HEK293 (cell line): ENCODE measurements at regions of chr12 and their contacts with region 1.

Region 1: DNA sequence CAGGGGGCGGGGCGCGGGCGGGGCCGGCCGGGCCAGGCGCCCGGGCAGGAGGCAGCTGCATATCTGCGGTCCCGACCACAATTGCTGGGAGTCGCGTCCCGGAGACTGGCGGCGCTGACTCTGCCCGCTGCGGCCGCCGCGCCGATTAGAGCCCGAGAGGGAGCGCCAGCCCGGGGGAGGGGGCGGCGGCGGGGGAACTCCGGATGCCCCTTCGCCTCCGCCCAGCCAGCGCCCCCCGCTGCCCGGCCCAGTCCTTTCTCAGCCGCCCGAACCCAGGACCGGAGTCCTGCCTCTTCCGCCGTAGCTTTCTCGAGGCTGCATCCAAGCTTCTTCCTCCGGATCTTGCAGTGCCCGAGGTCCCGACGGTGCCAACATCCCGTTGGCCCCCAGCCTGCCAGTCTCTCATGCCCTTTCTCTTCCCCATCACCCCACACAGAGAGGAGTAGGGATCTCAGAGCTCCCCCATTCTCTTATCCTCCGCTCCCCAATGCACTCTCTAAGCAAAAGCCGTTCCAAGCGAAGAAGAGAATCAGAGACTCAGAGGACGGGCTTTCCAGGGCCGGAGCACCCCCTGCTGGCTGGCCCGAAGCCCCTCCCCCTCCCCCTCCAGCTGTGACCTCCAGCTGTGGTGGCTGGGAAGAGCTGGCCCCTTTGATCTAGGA is 8.8 kb upstream of the SP7 start:
- H3K4me3 ChIP-seq: peak overlapping the region; percentile 62
- H3K27ac ChIP-seq: peak overlapping the region; percentile 21; the same call in 1 of the 2 replicates
- H3K4me1 ChIP-seq: no peaks in the 10 kb centered on the region
- CTCF ChIP-seq: peak; percentile 93

Region 2: DNA sequence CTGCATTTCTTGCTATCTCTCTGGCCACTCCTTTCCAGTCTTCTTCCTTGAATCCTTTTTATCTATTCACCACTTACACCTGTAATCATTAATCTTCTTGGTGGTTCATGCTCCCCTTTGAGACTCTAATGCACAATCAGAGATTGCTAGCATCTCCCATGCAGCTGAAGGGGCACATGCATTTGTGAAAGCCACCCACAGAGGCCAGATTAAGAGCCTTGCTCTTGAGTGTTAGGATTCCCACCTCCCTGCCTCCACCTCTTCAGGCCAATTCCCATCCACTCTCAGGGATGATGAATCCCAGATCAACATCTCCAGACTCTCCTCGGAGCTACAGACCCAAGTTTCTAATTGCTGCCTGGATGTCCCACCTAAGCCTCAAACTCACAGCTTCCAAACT is 415.4 kb before region 1 on chr12:
- CTCF ChIA-PET with region 1: no interaction called
- POLR2A ChIA-PET with region 1: no interaction called
- H3K4me3 ChIP-seq: no peak overlapping the region
- H3K27ac ChIP-seq: no peak overlapping the region
- H3K4me1 ChIP-seq: peaks cover 17% of the 10 kb centered on the region
- CTCF ChIP-seq: no peak

Region 3: DNA sequence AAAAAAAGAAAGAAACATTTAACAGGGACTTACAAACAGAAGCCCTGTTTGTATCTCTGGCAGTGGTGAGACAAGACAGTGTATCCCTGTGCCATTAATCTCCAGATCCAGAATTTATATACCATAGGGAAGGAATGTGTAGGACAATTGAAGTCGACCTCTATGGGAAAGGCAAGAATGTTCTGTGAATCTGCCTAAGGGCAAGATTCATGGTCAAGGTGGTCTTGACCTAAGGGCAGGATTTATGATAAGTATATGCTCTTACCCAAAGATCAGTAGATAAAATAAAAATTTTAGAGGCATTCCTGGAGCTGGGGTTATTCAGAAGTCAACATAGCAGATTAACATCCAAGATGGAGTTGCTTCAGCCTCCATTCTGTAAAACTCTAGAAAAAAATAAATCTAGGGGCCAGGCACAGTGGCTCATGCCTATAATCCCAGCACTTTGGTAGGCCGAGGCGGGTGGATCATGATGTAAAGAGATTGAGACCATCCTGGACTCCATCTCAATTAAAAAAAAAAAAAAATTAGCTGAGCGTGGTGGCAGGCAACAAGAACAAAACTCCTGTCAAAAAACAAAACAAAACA is 14.0 kb after region 1 on chr12:
- CTCF ChIA-PET with region 1: interaction called, 16 read pairs
- POLR2A ChIA-PET with region 1: interaction called, 3 read pairs
- H3K4me3 ChIP-seq: no peak overlapping the region
- H3K27ac ChIP-seq: no peak overlapping the region
- H3K4me1 ChIP-seq: no peaks in the 10 kb centered on the region
- CTCF ChIP-seq: no peak

Region 4: DNA sequence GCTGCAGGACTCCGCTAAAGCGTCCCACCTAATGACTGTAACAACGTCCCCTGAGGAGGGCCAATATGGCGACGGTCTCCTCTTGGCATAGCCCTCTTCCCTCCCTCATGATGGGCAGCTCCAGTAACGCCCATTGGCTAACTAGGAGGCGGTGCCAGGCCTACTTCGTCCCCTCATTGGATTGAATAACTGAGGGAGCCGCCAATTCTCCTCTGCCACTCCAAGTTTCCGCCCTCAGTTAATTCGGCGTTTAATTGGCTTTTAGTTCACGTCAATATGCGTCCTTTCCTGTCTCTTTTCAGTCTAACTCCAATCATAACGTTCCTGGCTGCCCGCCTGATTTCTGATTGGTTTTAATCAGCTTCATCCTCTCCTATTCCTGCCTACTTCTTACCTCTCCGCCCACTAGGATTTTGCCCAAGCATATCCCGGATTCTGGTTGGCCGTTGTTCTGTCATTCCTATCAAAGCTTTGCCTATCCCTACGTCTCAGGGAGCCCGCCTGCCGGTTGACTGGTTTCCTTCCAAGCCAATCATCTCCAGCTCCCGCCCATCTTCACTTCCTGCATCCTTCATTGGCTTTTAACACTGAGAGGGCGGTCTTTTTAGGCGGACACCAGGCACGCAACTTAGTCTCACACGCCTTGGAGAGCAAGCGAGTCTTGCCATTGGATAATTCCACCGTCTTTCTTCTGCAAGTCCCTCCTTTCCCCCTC is 34.6 kb after region 1 on chr12:
- CTCF ChIA-PET with region 1: interaction called, 4 read pairs
- POLR2A ChIA-PET with region 1: interaction called, 20 read pairs
- H3K4me3 ChIP-seq: peak overlapping the region; percentile 70
- H3K27ac ChIP-seq: peak overlapping the region; percentile 95
- H3K4me1 ChIP-seq: peaks cover 17% of the 10 kb centered on the region
- CTCF ChIP-seq: no peak

Region 5: DNA sequence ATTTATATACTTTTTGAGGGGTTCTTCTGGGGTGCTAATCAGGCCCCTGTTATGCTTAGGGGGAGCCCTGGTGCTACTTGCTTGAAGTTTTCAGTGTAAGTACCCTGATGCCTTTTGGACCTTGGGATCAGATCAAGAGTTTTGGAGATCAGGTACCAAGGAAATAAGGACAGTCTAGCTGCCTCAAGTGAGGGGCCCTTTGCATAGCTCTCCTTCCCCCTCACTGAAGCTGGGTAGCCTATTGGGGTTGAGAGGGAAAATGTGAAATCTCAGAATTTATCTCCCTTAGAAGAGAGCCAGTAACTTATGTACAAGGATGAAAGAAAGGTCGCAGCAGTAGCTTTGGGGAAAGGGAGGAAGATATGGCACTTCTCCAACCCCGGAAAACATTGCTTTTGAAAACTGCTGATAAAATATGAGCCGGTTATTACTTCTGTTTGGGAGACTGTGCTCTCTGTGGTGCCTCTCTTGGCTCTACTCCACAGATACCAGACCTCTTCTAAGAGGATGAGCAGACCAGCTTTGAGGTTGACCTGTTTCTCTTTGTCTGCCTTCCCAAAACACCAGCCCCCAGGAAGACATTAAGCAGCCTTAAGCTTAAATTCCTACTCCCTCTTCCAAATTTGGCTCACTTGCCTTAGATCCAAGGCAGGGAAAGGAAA is 69.9 kb after region 1 on chr12:
- CTCF ChIA-PET with region 1: interaction called, 5 read pairs
- POLR2A ChIA-PET with region 1: interaction called, 18 read pairs
- H3K4me3 ChIP-seq: no peak overlapping the region
- H3K27ac ChIP-seq: no peak overlapping the region; the same call in 1 of the 2 replicates
- H3K4me1 ChIP-seq: peaks cover 10% of the 10 kb centered on the region
- CTCF ChIP-seq: no peak

Region 6: GRCh38 chr12:53427905-53428594 is 83.1 kb after region 1 on chr12:
- CTCF ChIA-PET with region 1: interaction called, 22 read pairs
- POLR2A ChIA-PET with region 1: no interaction called
- H3K4me3 ChIP-seq: no peak overlapping the region
- H3K27ac ChIP-seq: no peak overlapping the region; the same call in 1 of the 2 replicates
- H3K4me1 ChIP-seq: peaks cover 12% of the 10 kb centered on the region
- CTCF ChIP-seq: no peak